Dendritic cell treated with granulocyte-macrophage colony-stimulating factor and Interleukin-4, amounts not matched to agents 40 ng/mL and 50 ng/mL, for 4 days (primary cell): ENCODE measurements at regions of chr4 and their contacts with region 1.

Region 1: DNA sequence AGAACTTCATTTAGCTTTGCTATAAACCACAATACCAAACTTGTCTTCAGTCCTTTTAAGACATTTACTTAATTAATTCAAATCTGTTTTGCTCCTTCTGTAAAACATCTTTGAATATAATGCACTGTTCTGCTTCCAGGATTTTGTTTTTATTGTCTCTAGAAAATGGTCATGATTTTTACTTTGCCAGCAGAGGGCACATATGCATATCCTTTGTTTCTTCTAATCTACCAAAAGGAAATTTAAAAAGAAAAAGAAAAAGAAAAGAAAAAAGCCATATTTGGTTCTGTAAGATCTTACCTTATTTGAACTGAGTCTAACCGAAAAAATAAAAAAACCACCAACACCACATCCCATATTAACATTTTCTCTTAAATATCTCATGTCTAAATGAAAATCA is 101.9 kb upstream of the CCSER1 start:
- H3K4me3 Mint-ChIP-seq: no peak overlapping the region
- H3K27ac Mint-ChIP-seq: no peak overlapping the region
- H3K4me1 Mint-ChIP-seq: peaks cover 35% of the 10 kb centered on the region
- H3K27me3 Mint-ChIP-seq: no peaks in the 10 kb centered on the region

Region 2: GRCh38 chr4:89949782-89950387 is 75.4 kb before region 1 on chr4:
- intact Hi-C with region 1: loop called (anchors 2 kb)
- H3K4me3 Mint-ChIP-seq: no peak overlapping the region
- H3K27ac Mint-ChIP-seq: no peak overlapping the region
- H3K4me1 Mint-ChIP-seq: no peaks in the 10 kb centered on the region
- H3K27me3 Mint-ChIP-seq: no peaks in the 10 kb centered on the region

Region 3: DNA sequence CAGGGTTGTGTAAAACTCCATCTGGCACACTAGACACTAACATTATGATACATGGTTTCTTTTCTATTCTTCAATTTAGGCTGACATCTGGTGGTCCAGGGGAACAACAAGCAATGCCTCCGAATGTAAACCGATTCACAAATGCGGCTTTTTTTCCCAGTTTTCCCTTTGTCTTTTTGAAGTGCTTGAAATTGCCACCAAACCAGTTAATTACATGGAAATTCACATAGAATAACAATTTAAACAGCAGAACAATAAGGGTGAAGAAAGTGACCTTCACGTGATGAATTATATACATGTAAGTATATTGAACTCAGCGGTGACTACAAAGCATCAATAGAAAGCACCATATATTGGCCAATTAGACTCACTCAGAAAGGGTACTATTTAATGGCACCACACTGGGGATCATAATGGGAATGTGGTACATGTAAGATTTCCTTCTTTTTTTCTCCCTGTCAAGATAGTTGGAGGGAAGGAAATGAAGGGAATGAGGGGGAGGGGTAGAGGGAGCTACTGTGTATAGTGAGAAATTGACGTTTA is 26.7 kb before region 1 on chr4:
- intact Hi-C with region 1: no loop called
- H3K4me3 Mint-ChIP-seq: no peak overlapping the region
- H3K27ac Mint-ChIP-seq: no peak overlapping the region
- H3K4me1 Mint-ChIP-seq: no peaks in the 10 kb centered on the region
- H3K27me3 Mint-ChIP-seq: no peaks in the 10 kb centered on the region

Region 4: DNA sequence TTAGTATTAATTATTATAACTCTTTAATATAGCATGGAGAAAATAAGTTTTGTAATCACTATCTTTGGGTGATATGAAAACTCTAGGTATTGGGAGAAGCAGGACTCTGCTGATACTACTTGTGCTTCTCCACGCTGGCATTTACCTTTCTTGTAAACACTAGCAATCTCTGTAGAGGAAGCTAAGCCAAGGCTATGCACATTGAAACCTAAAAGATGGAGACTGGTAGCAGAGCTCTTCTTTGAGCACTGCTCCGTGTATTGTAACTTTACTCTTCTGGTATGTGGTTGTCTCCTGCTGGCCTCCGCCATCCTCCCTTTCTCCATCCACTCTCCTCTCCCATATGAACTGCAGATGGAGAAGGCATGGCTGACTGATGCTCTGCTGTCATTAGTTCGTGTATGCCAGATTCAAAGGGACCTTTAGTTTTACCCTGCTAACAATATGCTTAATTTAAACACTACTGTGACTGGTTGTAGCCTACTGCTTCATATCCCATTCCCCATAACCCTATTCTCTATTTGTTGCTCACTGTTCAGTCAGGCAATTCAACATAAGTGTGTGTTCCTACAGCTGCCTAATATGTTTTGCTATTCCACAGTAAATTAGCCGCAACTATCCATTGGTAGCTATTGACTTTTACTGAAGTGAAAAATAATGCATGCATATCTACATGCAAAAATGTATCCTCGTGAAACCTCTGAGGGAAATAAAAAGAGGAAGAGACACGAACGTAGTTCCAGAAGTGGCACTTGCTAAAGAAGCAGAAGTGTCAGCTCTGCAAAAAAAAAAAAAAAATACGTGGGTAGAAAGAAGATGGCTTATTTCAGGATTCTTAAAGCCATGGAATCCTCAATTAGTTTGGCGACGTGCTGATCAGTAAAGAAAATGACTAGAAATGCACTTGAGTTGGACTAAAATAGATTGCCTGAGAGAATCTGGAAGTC is 46.3 kb after region 1 on chr4:
- intact Hi-C with region 1: loop called (anchors 5 kb)
- H3K4me3 Mint-ChIP-seq: peak overlapping the region; percentile 27
- H3K27ac Mint-ChIP-seq: peak overlapping the region; percentile 91
- H3K4me1 Mint-ChIP-seq: peaks cover 28% of the 10 kb centered on the region
- H3K27me3 Mint-ChIP-seq: no peaks in the 10 kb centered on the region

Region 5: DNA sequence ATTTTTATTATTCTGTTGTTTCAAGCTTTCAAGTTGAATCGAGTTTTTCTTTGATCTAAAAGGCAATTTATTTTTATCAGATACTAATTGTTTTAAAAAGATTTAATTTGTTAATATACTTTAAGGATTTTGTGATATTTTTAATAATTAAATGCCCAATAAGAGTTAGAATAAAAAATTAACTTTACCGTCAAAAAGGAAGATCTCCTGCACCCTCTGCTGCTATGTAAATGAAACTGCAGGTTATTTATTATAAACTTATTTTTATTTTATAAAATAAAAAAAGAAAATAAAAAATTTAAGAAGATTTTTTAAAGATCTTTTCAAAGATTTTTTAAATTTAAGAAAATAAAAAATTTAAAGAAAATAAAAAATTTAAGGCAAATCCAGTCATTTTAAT is 268.1 kb after region 1 on chr4:
- intact Hi-C with region 1: loop called (anchors 2 kb)
- H3K4me3 Mint-ChIP-seq: no peak overlapping the region
- H3K27ac Mint-ChIP-seq: no peak overlapping the region
- H3K4me1 Mint-ChIP-seq: no peaks in the 10 kb centered on the region
- H3K27me3 Mint-ChIP-seq: no peaks in the 10 kb centered on the region